Psoas muscle (tissue), 8 donors: ENCODE measurements at regions of chr17 and their contacts with region 1.

Region 1: GRCh38 chr17:7435221-7435675 is at the start of gene TMEM102:
- DNase-seq: peak; percentile 94 to 97
- ATAC-seq: peak; percentile 79 to 84 (median 82)
- H3K4me3 ChIP-seq: peak within 1 kb of the TSS; percentile 72
- H3K27ac ChIP-seq: peak within 1 kb of the TSS; percentile 100
- H3K4me1 ChIP-seq: peaks cover 33% of the 10 kb centered on the region
- H3K27me3 ChIP-seq: no peaks in the 10 kb centered on the region
- CTCF ChIP-seq: no peak
- total RNA-seq, gene TMEM102: 0.41 to 0.95 (median 0.68) TPM

Region 2: GRCh38 chr17:7403977-7404736 is 31.1 kb before region 1 on chr17 and contains the start of gene TMEM256:
- intact Hi-C with region 1: loop called in 1 of 2 experiments (anchors 2 kb)
- DNase-seq: peak; percentile 98 to 99
- ATAC-seq: peak; percentile 91 to 93 (median 92)
- H3K4me3 ChIP-seq: peak within 1 kb of the TSS; percentile 73
- H3K27ac ChIP-seq: peak within 1 kb of the TSS; percentile 75
- H3K4me1 ChIP-seq: peaks cover 9% of the 10 kb centered on the region
- H3K27me3 ChIP-seq: no peaks in the 10 kb centered on the region
- CTCF ChIP-seq: no peak
- total RNA-seq, gene TMEM256: 47.1 to 80.4 (median 53.5) TPM

Region 3: GRCh38 chr17:7561028-7561575 is 125.9 kb after region 1 on chr17:
- intact Hi-C with region 1: loop called (anchors 2 to 5 kb)
- DNase-seq: peak; percentile 92 to 96
- ATAC-seq: peak; percentile 82 to 88 (median 84)
- H3K4me3 ChIP-seq: peak overlapping the region; percentile 96
- H3K27ac ChIP-seq: peak overlapping the region; percentile 94
- H3K4me1 ChIP-seq: peaks cover 45% of the 10 kb centered on the region
- H3K27me3 ChIP-seq: no peaks in the 10 kb centered on the region
- CTCF ChIP-seq: peak; percentile 86

Region 4: GRCh38 chr17:7687908-7688807 is 252.9 kb after region 1 on chr17 and contains the start of gene WRAP53:
- intact Hi-C with region 1: loop called in 1 of 2 experiments (anchors 10 kb)
- DNase-seq: peak; percentile 97 to 98
- ATAC-seq: peak; percentile 84 to 91 (median 89)
- H3K4me3 ChIP-seq: peak within 1 kb of the TSS; percentile 88
- H3K27ac ChIP-seq: peak within 1 kb of the TSS; percentile 98
- H3K4me1 ChIP-seq: peaks cover 29% of the 10 kb centered on the region
- H3K27me3 ChIP-seq: no peaks in the 10 kb centered on the region
- CTCF ChIP-seq: peak; percentile 99
- total RNA-seq, gene WRAP53: 4.5 to 6.6 (median 5.0) TPM